ENCODE measurements at regions of chr6 and their contacts with region 1.

Region 1: GRCh38 chr6:159979136-159979874 is 10.4 kb downstream of the IGF2R start:
- DNase-seq: peak; percentile 86
- H3K4me3 Mint-ChIP-seq: peak overlapping the region; percentile 84
- H3K27ac Mint-ChIP-seq: peak overlapping the region; percentile 92
- H3K4me1 Mint-ChIP-seq: peaks cover 76% of the 10 kb centered on the region
- H3K27me3 Mint-ChIP-seq: no peaks in the 10 kb centered on the region

Region 2: DNA sequence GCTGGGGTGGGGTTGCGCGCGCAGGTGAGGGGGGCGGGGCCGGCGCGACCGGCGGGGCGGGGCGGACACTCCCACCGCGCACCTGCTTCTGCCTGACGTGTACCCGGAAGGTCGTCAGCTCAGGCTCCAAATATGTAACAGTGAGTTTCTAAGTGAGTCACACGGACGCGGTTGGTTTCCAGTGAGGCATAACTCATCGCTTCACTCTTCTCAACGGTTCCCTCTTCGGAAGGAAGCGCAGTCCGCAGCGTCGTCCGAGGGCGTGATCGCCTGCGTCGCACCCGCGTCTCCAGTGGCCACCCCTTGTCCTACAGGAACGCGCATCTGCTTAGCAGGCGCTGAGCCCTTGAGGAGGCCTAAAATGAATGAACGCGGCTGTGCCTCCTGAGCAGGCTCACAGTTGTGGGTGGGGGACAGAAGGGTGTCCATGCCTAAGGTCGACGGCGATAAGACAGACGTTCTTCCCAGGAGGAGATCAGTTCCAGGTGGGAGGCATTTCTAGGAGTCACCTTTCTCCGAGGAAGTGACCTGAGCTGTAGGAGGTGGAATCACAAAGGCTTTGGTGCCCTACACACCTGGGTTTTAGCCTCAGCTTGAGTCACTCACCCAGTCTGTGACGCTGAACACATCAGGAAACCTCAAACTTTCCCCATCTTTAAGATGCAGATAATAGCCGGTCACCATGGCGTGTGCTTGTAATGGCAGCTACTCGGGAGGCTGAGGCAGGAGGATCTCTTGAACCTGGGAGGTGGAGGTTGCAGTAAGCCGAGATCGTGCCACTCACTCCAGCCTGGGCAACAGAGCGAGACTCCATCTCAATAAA is 1109.3 kb before region 1 on chr6:
- intact Hi-C with region 1: loop called (anchors 5 kb)
- DNase-seq: peak; percentile 96
- H3K4me3 Mint-ChIP-seq: peak overlapping the region; percentile 86
- H3K27ac Mint-ChIP-seq: peak overlapping the region; percentile 98
- H3K4me1 Mint-ChIP-seq: peaks cover 29% of the 10 kb centered on the region
- H3K27me3 Mint-ChIP-seq: peaks cover 4% of the 10 kb centered on the region

Region 3: DNA sequence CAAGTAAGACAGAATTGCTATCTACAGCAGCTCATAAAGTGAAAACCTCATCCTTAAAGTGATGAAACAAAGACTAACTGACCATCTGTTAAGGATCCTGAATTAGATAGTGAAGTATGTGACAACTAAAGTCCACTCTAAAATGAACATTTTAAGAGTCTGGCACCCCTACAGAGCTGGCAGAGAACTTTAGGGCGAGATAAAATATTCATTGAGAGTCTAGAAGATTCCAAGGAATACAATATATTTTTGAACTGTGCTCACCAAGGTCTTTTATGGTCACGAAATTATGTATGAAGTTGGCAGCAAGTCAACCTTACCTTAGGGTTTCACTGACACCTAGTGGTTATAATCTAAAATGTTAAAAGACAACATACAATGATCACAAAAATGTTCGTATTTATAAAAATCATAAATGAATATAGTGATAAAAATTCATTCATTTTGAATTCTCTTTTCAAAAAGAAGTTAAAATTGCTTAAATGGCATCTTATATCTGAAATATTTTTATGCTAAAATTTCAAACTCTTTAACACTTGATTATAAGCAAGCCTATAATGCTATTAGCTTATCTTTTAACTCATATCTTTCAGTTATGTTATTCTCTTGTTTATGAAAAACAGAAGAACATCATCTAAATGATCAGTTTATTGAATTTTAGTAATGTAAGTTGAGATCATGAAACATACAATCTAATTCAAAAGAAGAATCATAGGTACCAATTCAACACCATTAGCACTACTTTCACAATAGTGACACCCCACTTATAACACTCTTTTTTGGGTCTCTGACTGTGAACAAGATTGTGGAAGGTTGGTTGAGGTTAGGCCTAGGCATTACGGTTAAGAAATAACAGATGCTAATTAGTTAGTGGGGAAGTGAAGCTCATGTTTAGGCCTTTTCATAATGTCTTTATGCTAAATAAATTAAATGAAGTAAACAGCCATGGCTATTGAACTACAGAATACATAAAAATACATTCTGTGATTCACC is 1006.8 kb before region 1 on chr6:
- intact Hi-C with region 1: no loop called
- DNase-seq: peak; percentile 63
- H3K4me3 Mint-ChIP-seq: no peak overlapping the region
- H3K27ac Mint-ChIP-seq: no peak overlapping the region
- H3K4me1 Mint-ChIP-seq: peaks cover 4% of the 10 kb centered on the region
- H3K27me3 Mint-ChIP-seq: peaks cover 2% of the 10 kb centered on the region

Region 4: DNA sequence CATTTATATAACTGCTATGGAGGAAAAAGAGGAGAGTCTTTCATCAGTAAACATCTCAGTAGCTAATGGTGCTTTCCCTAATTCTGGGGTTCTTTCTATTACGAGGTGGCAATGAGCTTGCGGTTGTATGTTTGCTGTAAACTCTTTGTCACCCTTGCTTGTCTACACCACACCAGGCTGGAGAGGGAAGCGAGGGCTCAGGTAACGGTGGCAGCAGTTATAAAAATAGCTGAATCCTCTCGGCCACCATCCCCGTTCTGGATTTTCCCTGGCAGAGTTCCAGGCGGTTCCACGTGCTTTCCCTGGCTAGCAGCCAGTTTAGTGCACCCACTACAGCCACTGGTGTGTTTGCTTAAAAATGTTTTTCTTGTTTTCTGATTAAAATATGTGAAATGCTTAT is 49.5 kb before region 1 on chr6:
- intact Hi-C with region 1: loop called (anchors 1 kb)
- DNase-seq: no peak
- H3K4me3 Mint-ChIP-seq: no peak overlapping the region
- H3K27ac Mint-ChIP-seq: no peak overlapping the region
- H3K4me1 Mint-ChIP-seq: peaks cover 23% of the 10 kb centered on the region
- H3K27me3 Mint-ChIP-seq: peaks cover 20% of the 10 kb centered on the region

Region 5: DNA sequence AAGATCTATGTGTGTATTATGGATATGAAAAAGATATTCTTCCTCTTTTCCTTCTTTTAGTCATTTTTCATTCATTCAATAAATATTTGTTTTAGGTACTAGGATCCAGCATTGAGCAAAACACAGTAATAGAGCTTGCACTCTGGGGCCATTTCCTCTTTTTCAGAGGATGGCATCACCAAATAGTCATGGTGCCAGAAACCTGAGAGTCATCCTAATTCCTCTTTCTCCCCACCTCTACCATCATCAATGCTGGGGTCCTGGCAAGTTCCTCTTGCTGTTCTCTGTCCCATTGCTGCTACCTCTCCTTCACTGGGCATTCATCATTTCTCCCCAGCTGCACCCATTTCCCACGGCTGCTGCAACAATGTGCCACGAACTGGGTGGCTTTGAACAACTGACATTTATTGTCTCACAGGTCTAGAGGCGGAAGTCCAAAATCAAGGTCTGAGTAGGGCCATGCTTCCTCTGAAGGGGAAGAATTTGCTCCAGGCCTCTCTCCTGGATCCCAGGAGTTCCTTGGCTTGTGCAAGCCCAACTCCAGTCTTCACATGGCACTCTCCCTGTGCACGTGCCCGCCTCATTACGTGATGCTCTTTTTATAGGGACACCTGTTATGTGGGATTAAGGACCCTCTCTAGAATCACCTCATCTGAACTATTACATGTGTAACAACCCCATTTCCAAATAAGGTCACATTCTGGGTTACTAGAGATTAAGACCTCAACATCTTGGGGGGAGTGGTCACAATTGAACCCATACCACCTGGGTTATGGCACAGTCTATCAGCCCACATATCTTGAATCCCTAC is 19.9 kb before region 1 on chr6:
- intact Hi-C with region 1: no loop called
- DNase-seq: no peak
- H3K4me3 Mint-ChIP-seq: no peak overlapping the region
- H3K27ac Mint-ChIP-seq: no peak overlapping the region
- H3K4me1 Mint-ChIP-seq: peaks cover 7% of the 10 kb centered on the region
- H3K27me3 Mint-ChIP-seq: peaks cover 24% of the 10 kb centered on the region

Region 6: GRCh38 chr6:159989492-159990480 is 10.5 kb after region 1 on chr6:
- intact Hi-C with region 1: loop called (anchors 1 kb)
- DNase-seq: no peak
- H3K4me3 Mint-ChIP-seq: peak overlapping the region; percentile 19
- H3K27ac Mint-ChIP-seq: peak overlapping the region; percentile 65
- H3K4me1 Mint-ChIP-seq: peaks cover 54% of the 10 kb centered on the region
- H3K27me3 Mint-ChIP-seq: no peaks in the 10 kb centered on the region

Region 7: GRCh38 chr6:160015778-160016684 is 36.7 kb after region 1 on chr6:
- intact Hi-C with region 1: loop called (anchors 1 kb)
- DNase-seq: peak; percentile 89
- H3K4me3 Mint-ChIP-seq: peak overlapping the region; percentile 71
- H3K27ac Mint-ChIP-seq: peak overlapping the region; percentile 97
- H3K4me1 Mint-ChIP-seq: peaks cover 62% of the 10 kb centered on the region
- H3K27me3 Mint-ChIP-seq: no peaks in the 10 kb centered on the region